ENCODE measurements at regions of chr4 and their contacts with region 1.

Region 1: GRCh38 chr4:111120191-111120590 is 497.3 kb upstream of the PITX2 start:
- DNase-seq: no peak
- ATAC-seq: no peak
- H3K4me3 ChIP-seq: no peak overlapping the region
- H3K27ac ChIP-seq: no peak overlapping the region
- H3K4me1 ChIP-seq: no peaks in the 10 kb centered on the region
- H3K27me3 ChIP-seq: no peaks in the 10 kb centered on the region
- CTCF ChIP-seq: no peak

Region 2: DNA sequence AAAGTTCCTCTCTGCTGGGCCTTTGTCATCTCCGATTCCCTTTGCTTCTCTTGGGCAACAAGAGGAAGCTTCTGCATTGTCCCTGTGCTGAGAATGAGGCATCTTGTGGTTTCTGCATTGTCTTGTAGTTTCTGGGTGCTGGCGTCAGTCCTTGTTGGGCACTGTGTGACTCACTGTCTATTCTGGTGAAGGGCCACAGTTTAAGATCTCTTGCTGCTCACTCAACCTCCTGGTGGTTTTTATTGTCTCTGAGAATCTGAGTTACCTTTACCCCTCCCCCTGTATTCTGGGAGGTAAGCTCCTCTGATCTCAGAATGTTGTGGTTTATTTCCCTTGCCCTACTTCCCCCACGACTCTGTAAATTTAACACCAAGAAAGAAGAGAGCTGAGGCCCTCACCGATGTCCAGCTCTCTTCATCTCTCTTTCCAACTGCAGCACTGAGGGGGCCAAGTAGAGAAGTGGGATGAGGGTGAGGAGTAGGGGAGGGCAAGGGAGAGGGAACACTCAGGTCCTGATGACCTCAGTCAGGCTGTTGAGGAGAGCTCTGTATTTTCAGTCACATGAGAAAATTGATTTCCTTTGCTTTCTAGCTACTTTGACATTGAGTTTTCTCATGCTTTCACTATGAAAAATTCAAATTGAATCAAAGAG is 55.7 kb before region 1 on chr4:
- intact Hi-C with region 1: loop called in 1 of 10 experiments (anchors 5 kb)
- DNase-seq: no peak
- ATAC-seq: no peak
- H3K4me3 ChIP-seq: no peak overlapping the region
- H3K27ac ChIP-seq: no peak overlapping the region
- H3K4me1 ChIP-seq: no peaks in the 10 kb centered on the region
- H3K27me3 ChIP-seq: no peaks in the 10 kb centered on the region
- CTCF ChIP-seq: no peak